Naive thymus-derived CD4-positive, alpha-beta T cell (primary cell): ENCODE measurements at regions of chr15 and their contacts with region 1.

Region 1: GRCh38 chr15:74768771-74769342 is 13.0 kb upstream of the CSK start:
- DNase-seq: peak in 7 of 9 donors; percentile 48 to 67 (median 62)
- ATAC-seq: peak; percentile 72
- H3K4me3 ChIP-seq: no peak overlapping the region
- H3K4me3 Mint-ChIP-seq: peak overlapping the region in 3 of 10 donors; percentile 8 to 41 (median 33)
- H3K27ac ChIP-seq: no peak overlapping the region
- H3K27ac Mint-ChIP-seq: peak overlapping the region in 2 of 9 donors; percentile 4 to 60
- H3K4me1 ChIP-seq: peaks cover 7 to 22% of the 10 kb centered on the region in 2 donors
- H3K4me1 Mint-ChIP-seq: peaks cover 14 to 35% (median 26%) of the 10 kb centered on the region in 7 donors
- H3K27me3 ChIP-seq: no peaks in the 10 kb centered on the region
- H3K27me3 Mint-ChIP-seq: peaks cover 0 to 7% (median 5%) of the 10 kb centered on the region in 5 donors

Region 2: GRCh38 chr15:74438721-74439316 is 330.0 kb before region 1 on chr15:
- CTCF ChIA-PET with region 1: no interaction called
- POLR2A ChIA-PET with region 1: no interaction called
- intact Hi-C with region 1: loop called in 1 of 2 experiments (anchors 1 kb)
- DNase-seq: peak; percentile 52 to 76 (median 72)
- ATAC-seq: peak; percentile 84
- H3K4me3 ChIP-seq: no peak overlapping the region
- H3K4me3 Mint-ChIP-seq: no peak overlapping the region
- H3K27ac ChIP-seq: no peak overlapping the region
- H3K27ac Mint-ChIP-seq: peak overlapping the region in 3 of 9 donors; percentile 11 to 55 (median 43)
- H3K4me1 ChIP-seq: peaks cover 6 to 11% of the 10 kb centered on the region in 2 donors
- H3K4me1 Mint-ChIP-seq: peaks cover 7 to 30% (median 15%) of the 10 kb centered on the region in 7 donors
- H3K27me3 ChIP-seq: no peaks in the 10 kb centered on the region
- H3K27me3 Mint-ChIP-seq: no peaks in the 10 kb centered on the region

Region 3: DNA sequence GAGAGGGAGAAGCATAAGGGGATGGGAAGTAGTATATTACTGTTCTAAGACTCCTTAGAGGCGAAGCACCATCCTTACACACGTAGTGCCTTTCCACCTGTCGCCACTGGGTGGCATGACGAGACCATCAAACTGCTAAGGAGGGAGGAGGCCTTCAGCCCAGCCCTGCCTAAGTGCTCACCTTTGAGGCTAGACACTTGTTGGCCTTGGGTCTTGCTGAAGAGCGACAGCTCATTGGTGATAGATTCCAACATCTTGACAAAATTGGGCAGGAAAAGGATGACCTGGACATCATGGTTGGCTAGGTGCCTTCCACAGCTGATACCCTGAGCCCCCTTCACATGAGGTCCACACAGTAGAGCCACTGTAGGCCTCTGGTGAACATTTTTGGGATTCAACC is 133.6 kb before region 1 on chr15:
- CTCF ChIA-PET with region 1: interaction called, 201 read pairs
- POLR2A ChIA-PET with region 1: interaction called, 11 read pairs
- intact Hi-C with region 1: loop called (anchors 1 kb)
- DNase-seq: peak; percentile 41 to 74 (median 65)
- ATAC-seq: peak; percentile 88
- H3K4me3 ChIP-seq: no peak overlapping the region
- H3K4me3 Mint-ChIP-seq: no peak overlapping the region
- H3K27ac ChIP-seq: no peak overlapping the region
- H3K27ac Mint-ChIP-seq: peak overlapping the region in 2 of 9 donors; percentile 25 to 74
- H3K4me1 ChIP-seq: no peaks in the 10 kb centered on the region
- H3K4me1 Mint-ChIP-seq: peaks cover 0 to 7% (median 0%) of the 10 kb centered on the region in 7 donors
- H3K27me3 ChIP-seq: no peaks in the 10 kb centered on the region
- H3K27me3 Mint-ChIP-seq: no peaks in the 10 kb centered on the region

Region 4: GRCh38 chr15:74793135-74794028 is 24.5 kb after region 1 on chr15:
- CTCF ChIA-PET with region 1: interaction called, 1,110 read pairs
- POLR2A ChIA-PET with region 1: interaction called, 1,077 read pairs
- intact Hi-C with region 1: loop called in 1 of 2 experiments (anchors 1 kb)
- DNase-seq: peak; percentile 62 to 78 (median 74)
- ATAC-seq: peak; percentile 63
- H3K4me3 ChIP-seq: peak overlapping the region; percentile 25
- H3K4me3 Mint-ChIP-seq: peak overlapping the region; percentile 51 to 97 (median 74)
- H3K27ac ChIP-seq: peak overlapping the region; percentile 92
- H3K27ac Mint-ChIP-seq: peak overlapping the region; percentile 49 to 98 (median 95)
- H3K4me1 ChIP-seq: peaks cover 89 to 98% of the 10 kb centered on the region in 2 donors
- H3K4me1 Mint-ChIP-seq: peaks cover 56 to 93% (median 82%) of the 10 kb centered on the region in 7 donors
- H3K27me3 ChIP-seq: no peaks in the 10 kb centered on the region
- H3K27me3 Mint-ChIP-seq: no peaks in the 10 kb centered on the region

Region 5: GRCh38 chr15:74835307-74835823 is 66.5 kb after region 1 on chr15:
- CTCF ChIA-PET with region 1: interaction called, 9 read pairs
- POLR2A ChIA-PET with region 1: no interaction called
- intact Hi-C with region 1: loop called in 1 of 2 experiments (anchors 1 kb)
- DNase-seq: peak in 5 of 9 donors; percentile 14 to 64 (median 21)
- ATAC-seq: peak; percentile 72
- H3K4me3 ChIP-seq: no peak overlapping the region
- H3K4me3 Mint-ChIP-seq: no peak overlapping the region
- H3K27ac ChIP-seq: no peak overlapping the region
- H3K27ac Mint-ChIP-seq: peak overlapping the region in 3 of 9 donors; percentile 5 to 48 (median 28)
- H3K4me1 ChIP-seq: no peaks in the 10 kb centered on the region
- H3K4me1 Mint-ChIP-seq: peaks cover 0 to 8% (median 4%) of the 10 kb centered on the region in 7 donors
- H3K27me3 ChIP-seq: no peaks in the 10 kb centered on the region
- H3K27me3 Mint-ChIP-seq: no peaks in the 10 kb centered on the region

Region 6: GRCh38 chr15:74906446-74907162 is 137.7 kb after region 1 on chr15 and contains the start of gene FAM219B:
- CTCF ChIA-PET with region 1: interaction called, 19 read pairs
- POLR2A ChIA-PET with region 1: interaction called, 9 read pairs
- intact Hi-C with region 1: loop called in 1 of 2 experiments (anchors 1 kb)
- DNase-seq: peak; percentile 44 to 86 (median 61)
- ATAC-seq: peak; percentile 93
- H3K4me3 ChIP-seq: peak within 1 kb of the TSS; percentile 72
- H3K4me3 Mint-ChIP-seq: peak within 1 kb of the TSS; percentile 93 to 99 (median 98)
- H3K27ac ChIP-seq: peak within 1 kb of the TSS; percentile 85
- H3K27ac Mint-ChIP-seq: peak within 1 kb of the TSS; percentile 90 to 98 (median 95)
- H3K4me1 ChIP-seq: peaks cover 17 to 20% of the 10 kb centered on the region in 2 donors
- H3K4me1 Mint-ChIP-seq: peaks cover 28 to 54% (median 42%) of the 10 kb centered on the region in 7 donors
- H3K27me3 ChIP-seq: no peaks in the 10 kb centered on the region
- H3K27me3 Mint-ChIP-seq: no peaks in the 10 kb centered on the region
- total RNA-seq, gene FAM219B: 40.5 to 111 (median 99.6) TPM